MCF 10A (cell line): ENCODE measurements at regions of chr9 and their contacts with region 1.

Region 1: GRCh38 chr9:6049798-6050197 is 34.4 kb upstream of the RANBP6 start:
- DNase-seq: peak; percentile 56
- H3K4me3 Mint-ChIP-seq: no peak overlapping the region
- H3K27ac Mint-ChIP-seq: no peak overlapping the region
- H3K4me1 Mint-ChIP-seq: peaks cover 11% of the 10 kb centered on the region
- H3K27me3 Mint-ChIP-seq: no peaks in the 10 kb centered on the region
- CTCF ChIP-seq: peak; percentile 23

Region 2: GRCh38 chr9:5688109-5688508 is 361.7 kb before region 1 on chr9:
- CTCF ChIA-PET with region 1: no interaction called
- POLR2A ChIA-PET with region 1: no interaction called
- intact Hi-C with region 1: no loop called
- DNase-seq: peak; percentile 54
- H3K4me3 Mint-ChIP-seq: no peak overlapping the region
- H3K27ac Mint-ChIP-seq: no peak overlapping the region
- H3K4me1 Mint-ChIP-seq: peaks cover 8% of the 10 kb centered on the region
- H3K27me3 Mint-ChIP-seq: no peaks in the 10 kb centered on the region
- CTCF ChIP-seq: no peak

Region 3: GRCh38 chr9:6024020-6024554 is 25.7 kb before region 1 on chr9:
- CTCF ChIA-PET with region 1: interaction called, 10 read pairs
- POLR2A ChIA-PET with region 1: no interaction called
- intact Hi-C with region 1: no loop called
- DNase-seq: peak; percentile 26
- H3K4me3 Mint-ChIP-seq: no peak overlapping the region
- H3K27ac Mint-ChIP-seq: no peak overlapping the region
- H3K4me1 Mint-ChIP-seq: peaks cover 14% of the 10 kb centered on the region
- H3K27me3 Mint-ChIP-seq: no peaks in the 10 kb centered on the region
- CTCF ChIP-seq: peak; percentile 41

Region 4: DNA sequence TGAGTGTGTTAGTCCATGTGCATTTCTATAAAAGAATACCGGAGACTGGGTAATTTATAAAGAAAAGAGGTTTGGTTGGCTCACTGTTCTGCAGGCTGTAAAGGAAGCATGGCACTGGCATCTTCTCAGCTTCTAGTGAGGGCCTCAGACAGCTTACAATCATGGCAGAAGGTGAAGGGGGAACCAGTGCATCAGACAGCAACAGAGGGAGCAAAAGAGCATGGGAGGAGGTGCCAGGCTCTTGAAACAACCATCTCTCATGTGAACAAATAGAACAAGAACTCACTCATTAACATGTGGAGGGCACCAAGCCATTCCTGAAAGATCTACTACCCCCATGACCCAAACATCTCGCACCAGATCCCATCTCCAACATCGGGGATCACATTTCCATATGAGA is 76.6 kb after region 1 on chr9:
- CTCF ChIA-PET with region 1: no interaction called
- POLR2A ChIA-PET with region 1: no interaction called
- intact Hi-C with region 1: no loop called
- DNase-seq: no peak
- H3K4me3 Mint-ChIP-seq: no peak overlapping the region
- H3K27ac Mint-ChIP-seq: no peak overlapping the region
- H3K4me1 Mint-ChIP-seq: no peaks in the 10 kb centered on the region
- H3K27me3 Mint-ChIP-seq: no peaks in the 10 kb centered on the region
- CTCF ChIP-seq: no peak

Region 5: GRCh38 chr9:7067169-7067568 is 1017.4 kb after region 1 on chr9:
- CTCF ChIA-PET with region 1: no interaction called
- POLR2A ChIA-PET with region 1: no interaction called
- intact Hi-C with region 1: no loop called
- DNase-seq: no peak
- H3K4me3 Mint-ChIP-seq: no peak overlapping the region
- H3K27ac Mint-ChIP-seq: no peak overlapping the region
- H3K4me1 Mint-ChIP-seq: no peaks in the 10 kb centered on the region
- H3K27me3 Mint-ChIP-seq: no peaks in the 10 kb centered on the region
- CTCF ChIP-seq: no peak